Spleen (tissue), 13 donors: ENCODE measurements at regions of chr2 and their contacts with region 1.

Region 1: DNA sequence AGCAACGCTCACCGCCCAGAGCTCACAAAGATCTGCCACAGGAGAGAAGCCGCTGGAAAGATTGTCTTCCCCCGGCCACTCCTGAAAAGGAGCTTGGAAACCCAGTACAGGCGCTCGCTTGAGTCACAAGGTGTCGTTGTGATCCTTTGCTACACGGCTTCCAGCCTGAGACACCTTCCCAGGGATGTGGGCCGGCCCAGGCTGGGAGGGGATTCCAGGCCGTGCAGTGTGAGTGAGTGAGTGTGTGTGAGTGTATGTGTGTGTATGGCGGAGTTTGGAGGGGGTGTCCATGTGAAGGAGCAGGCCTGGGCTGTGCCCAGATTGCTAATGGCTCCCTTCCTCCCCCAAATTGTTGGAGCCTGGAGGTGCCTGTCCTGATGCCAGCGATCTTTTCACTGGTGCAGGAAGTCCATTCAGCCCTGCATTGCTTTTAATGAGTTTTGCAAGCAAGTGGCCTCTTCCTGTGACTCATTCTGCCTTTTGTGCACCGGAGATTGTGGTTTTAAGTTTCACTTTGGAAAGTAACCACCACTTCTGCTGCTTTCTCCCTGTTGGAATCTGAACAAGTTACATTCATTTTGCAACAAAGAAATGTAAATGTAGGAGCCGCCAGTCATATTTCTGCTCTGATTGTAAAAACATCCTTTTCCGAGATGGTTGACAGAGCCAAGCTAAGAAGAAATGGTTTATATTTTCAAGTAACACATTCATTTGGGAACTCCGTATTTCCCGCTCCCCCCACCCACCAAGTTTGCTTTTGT is 83.7 kb downstream of the LPIN1 start:
- DNase-seq: peak; percentile 86
- H3K4me3 ChIP-seq: peak overlapping the region; percentile 0 to 55 (median 16)
- H3K27ac ChIP-seq: peak overlapping the region; percentile 59 to 84 (median 78)
- H3K4me1 ChIP-seq: peaks cover 29 to 73% (median 46%) of the 10 kb centered on the region in 6 donors
- H3K27me3 ChIP-seq: no peaks in the 10 kb centered on the region
- CTCF ChIP-seq: no peak
- POLR2A ChIP-seq: no peak

Region 2: DNA sequence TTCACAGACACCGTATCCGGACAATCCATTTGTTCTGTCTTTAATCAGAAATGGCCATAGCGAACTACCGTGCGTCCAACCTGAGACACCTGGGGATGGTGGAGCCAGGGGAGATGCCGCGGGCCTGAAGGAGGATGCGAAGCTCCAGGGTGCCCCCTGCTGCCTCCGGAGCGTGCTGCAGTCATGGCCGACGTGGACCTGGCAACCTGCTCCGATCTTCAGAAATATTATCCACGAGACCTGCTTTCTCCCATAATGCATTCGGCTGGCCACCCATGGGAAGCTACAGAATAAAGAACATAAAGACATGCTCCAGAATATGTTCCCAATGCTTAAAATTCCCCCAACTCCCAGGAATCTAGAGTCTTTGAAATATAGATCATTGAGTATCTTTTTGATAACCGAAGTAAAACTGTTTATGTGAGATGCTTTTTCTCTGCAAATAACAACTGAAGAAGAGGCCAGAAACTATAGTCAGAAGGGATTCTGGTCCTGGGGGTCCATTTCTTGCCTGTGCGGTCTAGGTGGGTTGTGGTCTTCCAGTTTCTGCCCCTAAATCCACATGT is 705.5 kb before region 1 on chr2:
- intact Hi-C with region 1: no loop called
- DNase-seq: peak; percentile 86
- H3K4me3 ChIP-seq: no peak overlapping the region
- H3K27ac ChIP-seq: no peak overlapping the region
- H3K4me1 ChIP-seq: peaks cover 2 to 32% (median 16%) of the 10 kb centered on the region in 6 donors
- H3K27me3 ChIP-seq: peaks cover 0 to 11% (median 0%) of the 10 kb centered on the region in 7 donors
- CTCF ChIP-seq: peak; percentile 43 to 82 (median 72)
- POLR2A ChIP-seq: no peak

Region 3: DNA sequence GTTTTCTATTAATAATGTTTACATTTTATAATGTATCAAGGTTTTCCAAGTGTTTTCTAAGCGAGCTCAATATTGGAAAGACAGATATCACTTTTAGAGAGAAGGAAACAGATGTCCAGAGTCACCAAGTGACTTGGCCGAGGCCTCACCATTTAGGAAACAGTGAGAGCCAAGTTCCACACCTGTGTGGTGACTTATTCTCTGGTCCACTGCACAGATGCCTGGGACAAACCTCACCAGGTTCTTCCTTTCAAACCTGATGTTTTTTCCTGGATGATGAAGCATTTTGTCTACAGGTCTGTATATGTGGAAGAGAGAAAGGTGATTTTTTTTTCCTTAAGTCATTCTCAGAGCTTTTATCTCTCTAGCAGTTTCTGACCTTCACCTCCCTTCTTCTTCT is 197.0 kb after region 1 on chr2:
- intact Hi-C with region 1: no loop called
- DNase-seq: no peak
- H3K4me3 ChIP-seq: no peak overlapping the region
- H3K27ac ChIP-seq: no peak overlapping the region
- H3K4me1 ChIP-seq: peaks cover 0 to 9% (median 3%) of the 10 kb centered on the region in 6 donors
- H3K27me3 ChIP-seq: no peaks in the 10 kb centered on the region
- CTCF ChIP-seq: no peak
- POLR2A ChIP-seq: no peak

Region 4: GRCh38 chr2:13006829-13007717 is 1176.9 kb after region 1 on chr2:
- intact Hi-C with region 1: loop called (anchors 2 kb)
- DNase-seq: no peak
- H3K4me3 ChIP-seq: peak overlapping the region in 2 of 8 donors; percentile 9 to 48
- H3K27ac ChIP-seq: peak overlapping the region in 7 of 8 donors; percentile 25 to 72 (median 56)
- H3K4me1 ChIP-seq: peaks cover 0 to 26% (median 9%) of the 10 kb centered on the region in 6 donors
- H3K27me3 ChIP-seq: peaks cover 0 to 7% (median 0%) of the 10 kb centered on the region in 7 donors
- CTCF ChIP-seq: peak; percentile 63 to 89 (median 81)
- POLR2A ChIP-seq: no peak